ENCODE measurements at regions of chr19 and their contacts with region 1.

Region 1: GRCh38 chr19:1652471-1653299 is at the start of gene TCF3:
- DNase-seq: peak; percentile 99
- ATAC-seq: peak; percentile 99
- total RNA-seq, gene TCF3: 20.0 TPM

Region 2: DNA sequence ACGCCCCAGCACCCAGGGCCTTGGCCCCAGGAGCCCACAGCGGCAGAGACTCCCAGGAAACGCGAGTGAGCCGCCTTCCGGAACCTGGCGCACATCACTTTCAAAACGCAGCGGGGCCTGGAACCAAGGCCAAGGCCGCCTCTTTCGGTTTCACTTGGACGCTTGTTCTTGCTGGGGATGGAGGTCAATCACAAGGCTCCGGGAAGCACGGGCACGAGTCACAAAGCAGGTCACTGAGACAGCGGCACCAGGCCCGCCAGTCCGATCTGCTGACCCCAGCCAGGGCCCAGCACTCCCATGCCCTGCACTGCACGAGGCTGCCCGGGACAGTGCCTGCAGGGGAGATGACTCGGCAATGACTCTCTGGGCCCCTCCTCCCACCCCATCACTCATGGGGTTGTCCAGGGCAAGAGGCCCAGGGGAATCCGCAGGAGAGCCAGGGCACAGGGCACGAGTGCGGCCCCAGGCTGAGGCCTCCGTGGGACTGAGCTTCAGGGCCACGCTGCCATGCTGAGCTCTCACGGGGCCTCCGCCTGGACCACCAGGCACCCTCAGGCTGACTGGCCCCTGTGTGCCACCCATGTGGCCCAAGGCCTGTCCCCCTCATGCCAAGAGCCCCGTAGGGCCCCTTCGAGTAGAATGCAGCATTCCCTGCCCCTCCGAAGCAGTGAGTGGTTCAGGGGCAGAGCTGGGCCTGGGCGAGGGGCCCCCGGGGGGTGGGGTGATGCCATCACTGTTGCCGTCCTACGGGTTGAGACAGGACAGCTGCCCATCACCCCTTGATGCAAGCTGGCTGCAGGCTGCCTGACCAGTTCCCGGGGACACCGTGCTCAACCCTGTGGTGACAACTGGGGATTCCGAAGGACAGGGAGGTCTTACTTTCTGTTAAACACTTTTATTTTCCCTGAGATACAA is 483.6 kb before region 1 on chr19:
- intact Hi-C with region 1: no loop called
- DNase-seq: no peak
- ATAC-seq: no peak

Region 3: GRCh38 chr19:1605236-1606137 is 47.2 kb before region 1 on chr19 and contains the start of gene UQCR11:
- intact Hi-C with region 1: loop called (anchors 2 kb)
- DNase-seq: peak; percentile 97
- ATAC-seq: peak; percentile 97
- total RNA-seq, gene UQCR11: 1,222 TPM

Region 4: GRCh38 chr19:1796395-1797142 is 143.9 kb after region 1 on chr19:
- intact Hi-C with region 1: no loop called
- DNase-seq: no peak
- ATAC-seq: no peak

Measured in Right ventricle myocardium superior (tissue), 1 donor.